HepG2 (cell line): ENCODE measurements at regions of chrX and their contacts with region 1.

Region 1: GRCh38 chrX:124462931-124463330 is 116.6 kb downstream of the SH2D1A start:
- DNase-seq: peak; percentile 44
- ATAC-seq: peak; percentile 63
- H3K4me3 ChIP-seq: no peak overlapping the region
- H3K27ac ChIP-seq: no peak overlapping the region
- H3K4me1 ChIP-seq: peaks cover 9% of the 10 kb centered on the region; the same call in 1 of the 2 replicates
- H3K27me3 ChIP-seq: no peaks in the 10 kb centered on the region
- CTCF ChIP-seq: no peak
- EP300 ChIP-seq: no peak
- POLR2A ChIP-seq: no peak
- RAD21 ChIP-seq: no peak

Region 2: DNA sequence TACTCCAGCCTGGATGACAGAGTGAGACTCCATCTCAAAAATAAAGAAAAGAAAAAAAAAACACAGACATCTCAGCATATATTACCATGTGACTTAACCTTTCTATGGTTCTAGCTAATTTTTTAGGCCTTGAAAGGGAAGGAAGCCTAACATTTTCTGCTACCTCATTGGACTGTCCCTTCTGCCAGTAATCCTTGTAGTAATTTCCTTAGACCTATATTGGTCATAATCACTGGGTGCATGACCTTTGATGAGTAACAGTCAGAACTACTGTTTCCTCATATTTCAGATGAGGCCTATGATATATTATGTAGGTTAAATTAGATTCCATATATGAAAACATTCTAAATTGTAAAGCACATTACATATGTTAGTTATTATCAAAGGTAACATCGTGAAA is 593.4 kb before region 1 on chrX:
- CTCF ChIA-PET with region 1: no interaction called
- POLR2A ChIA-PET with region 1: no interaction called
- in situ Hi-C with region 1: no loop called
- intact Hi-C with region 1: no loop called
- DNase-seq: no peak
- ATAC-seq: no peak
- H3K4me3 ChIP-seq: no peak overlapping the region
- H3K27ac ChIP-seq: no peak overlapping the region
- H3K4me1 ChIP-seq: no peaks in the 10 kb centered on the region
- H3K27me3 ChIP-seq: no peaks in the 10 kb centered on the region
- CTCF ChIP-seq: no peak
- EP300 ChIP-seq: no peak
- POLR2A ChIP-seq: no peak
- RAD21 ChIP-seq: no peak

Region 3: DNA sequence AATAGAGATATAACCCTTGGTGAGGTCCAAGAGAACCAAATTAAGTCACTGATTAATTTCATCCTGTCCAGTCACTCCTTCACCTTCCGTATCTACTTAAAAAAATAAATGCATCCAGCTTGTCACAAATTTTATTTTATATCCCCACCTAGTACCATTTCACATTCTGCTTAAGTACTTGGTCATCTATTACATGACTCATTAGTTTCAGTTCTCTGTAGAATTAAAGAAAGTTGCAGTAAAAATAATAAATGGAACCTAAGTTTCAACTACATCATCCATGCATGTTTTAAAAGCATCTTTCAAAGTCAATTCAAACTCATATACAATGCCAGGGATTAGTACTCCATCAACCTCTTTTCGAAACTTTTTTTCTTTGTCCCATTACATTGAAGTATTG is 13.6 kb after region 1 on chrX:
- CTCF ChIA-PET with region 1: no interaction called
- POLR2A ChIA-PET with region 1: no interaction called
- in situ Hi-C with region 1: no loop called
- intact Hi-C with region 1: no loop called
- DNase-seq: no peak
- ATAC-seq: no peak
- H3K4me3 ChIP-seq: no peak overlapping the region
- H3K27ac ChIP-seq: no peak overlapping the region
- H3K4me1 ChIP-seq: no peaks in the 10 kb centered on the region
- H3K27me3 ChIP-seq: no peaks in the 10 kb centered on the region
- CTCF ChIP-seq: no peak
- EP300 ChIP-seq: no peak
- POLR2A ChIP-seq: no peak
- RAD21 ChIP-seq: no peak

Region 4: DNA sequence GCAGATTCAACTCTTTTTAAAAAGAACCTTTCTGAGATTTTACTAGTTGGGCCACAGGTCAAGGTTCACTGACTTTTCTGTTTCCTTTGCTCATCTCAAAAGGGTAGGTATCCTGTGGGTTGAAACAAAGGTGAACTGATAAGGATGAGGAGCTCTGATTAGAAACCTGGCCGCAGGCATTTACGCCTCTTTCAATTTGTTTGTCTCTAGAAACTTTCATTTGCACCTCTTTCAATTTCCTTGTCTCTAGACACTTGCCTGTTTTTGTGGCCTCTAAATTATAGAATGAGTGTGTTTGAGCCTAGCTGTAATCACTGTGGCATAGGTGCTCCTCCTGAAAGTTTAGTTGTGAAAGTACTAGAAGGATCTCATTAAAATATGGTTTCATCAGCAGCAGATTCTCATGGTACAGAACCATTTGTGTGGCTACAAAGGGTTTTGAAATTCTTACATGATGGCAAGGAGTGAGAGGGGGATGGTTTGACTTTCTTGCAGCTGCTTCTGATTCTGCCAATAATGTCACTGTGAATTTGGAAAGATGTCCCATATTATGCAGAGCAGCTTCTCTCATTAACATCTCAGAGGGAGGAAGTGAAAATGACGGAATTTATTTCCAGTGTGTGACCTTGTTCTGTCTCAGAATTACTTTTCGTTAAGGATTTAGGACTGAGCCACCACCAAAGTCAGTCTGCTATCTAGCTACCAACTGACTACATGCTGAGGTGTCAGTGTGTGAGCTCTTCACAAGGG is 25.7 kb after region 1 on chrX:
- CTCF ChIA-PET with region 1: no interaction called
- POLR2A ChIA-PET with region 1: no interaction called
- in situ Hi-C with region 1: no loop called
- intact Hi-C with region 1: loop called (anchors 1 kb)
- DNase-seq: no peak
- ATAC-seq: no peak
- H3K4me3 ChIP-seq: no peak overlapping the region
- H3K27ac ChIP-seq: no peak overlapping the region
- H3K4me1 ChIP-seq: no peaks in the 10 kb centered on the region
- H3K27me3 ChIP-seq: no peaks in the 10 kb centered on the region
- CTCF ChIP-seq: no peak
- EP300 ChIP-seq: no peak
- POLR2A ChIP-seq: no peak
- RAD21 ChIP-seq: no peak